Panc1 (cell line): ENCODE measurements at regions of chr6 and their contacts with region 1.

Region 1: GRCh38 chr6:110039364-110039980 is 61.4 kb downstream of the GPR6 start:
- DNase-seq: peak; percentile 87
- ATAC-seq: peak; percentile 95
- H3K4me3 ChIP-seq: peak overlapping the region; percentile 31 to 71
- H3K27ac ChIP-seq: 0 out of 2 replicates have a peak overlapping the region, but pooled peaks have one; percentile 1
- H3K4me1 ChIP-seq: no peaks in the 10 kb centered on the region
- H3K27me3 ChIP-seq: no peaks in the 10 kb centered on the region
- CTCF ChIP-seq: peak; percentile 99

Region 2: GRCh38 chr6:109526905-109527628 is 512.4 kb before region 1 on chr6:
- CTCF ChIA-PET with region 1: interaction called, 21 read pairs
- POLR2A ChIA-PET with region 1: no interaction called
- in situ Hi-C with region 1: no loop called
- intact Hi-C with region 1: loop called (anchors 1 kb)
- DNase-seq: peak; percentile 57
- ATAC-seq: peak; percentile 97
- H3K4me3 ChIP-seq: no peak overlapping the region
- H3K27ac ChIP-seq: no peak overlapping the region
- H3K4me1 ChIP-seq: no peaks in the 10 kb centered on the region
- H3K27me3 ChIP-seq: peaks cover 17% of the 10 kb centered on the region
- CTCF ChIP-seq: peak; percentile 87

Region 3: GRCh38 chr6:109790131-109790530 is 249.3 kb before region 1 on chr6:
- CTCF ChIA-PET with region 1: interaction called, 14 read pairs
- POLR2A ChIA-PET with region 1: no interaction called
- in situ Hi-C with region 1: no loop called
- intact Hi-C with region 1: no loop called
- DNase-seq: no peak
- ATAC-seq: peak; percentile 40; the same call in 1 of the 2 replicates
- H3K4me3 ChIP-seq: no peak overlapping the region
- H3K27ac ChIP-seq: no peak overlapping the region
- H3K4me1 ChIP-seq: 0 out of 2 replicates have a peak, but pooled peaks cover 3% of the 10 kb centered on the region
- H3K27me3 ChIP-seq: no peaks in the 10 kb centered on the region
- CTCF ChIP-seq: no peak

Region 4: DNA sequence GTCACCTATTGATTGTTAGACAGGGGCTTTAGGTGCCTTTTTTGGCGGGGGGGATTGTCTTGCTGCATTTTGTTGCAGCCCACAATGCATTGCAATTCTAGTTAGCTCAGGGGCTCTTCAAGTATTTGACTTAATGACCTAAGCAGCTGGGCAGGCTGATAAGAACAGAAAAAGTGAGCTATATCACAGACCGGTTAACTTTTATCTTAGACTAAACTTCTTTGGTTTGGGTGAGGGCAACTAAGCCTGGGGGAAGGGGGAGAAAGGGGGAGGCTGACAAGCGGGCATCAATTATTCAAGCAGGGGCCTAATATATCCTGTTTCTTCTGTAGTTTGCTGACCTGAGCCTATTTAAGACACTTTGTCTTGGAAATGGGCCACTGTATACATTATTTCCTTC is 127.4 kb before region 1 on chr6:
- CTCF ChIA-PET with region 1: no interaction called
- POLR2A ChIA-PET with region 1: no interaction called
- in situ Hi-C with region 1: no loop called
- intact Hi-C with region 1: loop called (anchors 10 kb)
- DNase-seq: no peak
- ATAC-seq: no peak
- H3K4me3 ChIP-seq: no peak overlapping the region
- H3K27ac ChIP-seq: no peak overlapping the region
- H3K4me1 ChIP-seq: no peaks in the 10 kb centered on the region
- H3K27me3 ChIP-seq: peaks cover 14% of the 10 kb centered on the region
- CTCF ChIP-seq: no peak

Region 5: GRCh38 chr6:110389689-110390382 is 350.4 kb after region 1 on chr6:
- CTCF ChIA-PET with region 1: interaction called, 35 read pairs
- POLR2A ChIA-PET with region 1: no interaction called
- in situ Hi-C with region 1: no loop called
- intact Hi-C with region 1: no loop called
- DNase-seq: no peak
- ATAC-seq: no peak
- H3K4me3 ChIP-seq: no peak overlapping the region
- H3K27ac ChIP-seq: no peak overlapping the region
- H3K4me1 ChIP-seq: no peaks in the 10 kb centered on the region
- H3K27me3 ChIP-seq: no peaks in the 10 kb centered on the region; the same call in 1 of the 2 replicates
- CTCF ChIP-seq: no peak